AG04450 (cell line): ENCODE measurements at regions of chr13 and their contacts with region 1.

Region 1: GRCh38 chr13:27826379-27827353 is 34.4 kb downstream of the GSX1 start:
- DNase-seq: peak; percentile 59
- H3K4me3 ChIP-seq: peak overlapping the region; percentile 49
- H3K27ac ChIP-seq: no peak overlapping the region
- H3K27me3 ChIP-seq: peaks cover 21% of the 10 kb centered on the region
- CTCF ChIP-seq: peak; percentile 88

Region 2: DNA sequence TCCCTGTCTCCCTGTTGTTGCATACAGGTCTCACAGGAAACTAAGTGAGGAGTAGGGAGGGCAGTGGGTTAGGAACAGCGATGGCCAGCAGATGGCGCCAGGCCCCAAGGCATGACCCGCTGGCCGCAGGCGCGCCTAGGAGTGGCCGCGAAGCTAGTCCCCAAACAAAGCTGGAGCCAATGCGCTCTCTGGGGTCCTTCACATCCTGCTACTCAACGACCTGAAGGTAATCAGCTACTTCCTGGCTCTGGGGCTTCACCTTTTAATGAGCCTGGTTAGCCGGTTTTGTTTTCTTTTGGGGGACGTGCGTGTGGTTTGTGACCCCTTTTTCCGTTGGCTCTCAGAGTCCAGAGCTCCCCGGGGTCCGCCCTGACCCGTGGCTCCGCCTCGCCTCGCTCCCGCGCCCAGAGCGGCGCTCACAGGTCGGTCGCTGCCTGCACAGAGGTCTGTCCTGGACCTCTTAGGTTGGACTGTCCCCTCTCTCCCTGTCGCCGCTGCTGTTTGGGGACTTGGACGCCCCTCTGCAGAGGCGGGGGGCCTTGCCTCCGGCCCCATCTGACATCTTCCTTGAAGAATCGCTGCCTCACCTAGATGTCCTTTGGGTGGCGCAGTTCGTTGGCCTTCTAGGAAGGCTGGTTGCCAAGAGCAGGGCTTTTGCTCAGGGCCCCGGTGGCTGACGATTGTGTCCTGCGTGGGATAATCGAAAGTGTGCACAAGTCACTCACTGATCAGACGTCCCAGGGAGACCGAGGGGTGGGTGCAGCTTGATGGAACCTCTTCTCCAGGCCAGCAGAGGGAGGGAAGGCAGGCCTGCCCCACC is 464.4 kb before region 1 on chr13:
- CTCF ChIA-PET with region 1: interaction called, 227 read pairs
- POLR2A ChIA-PET with region 1: interaction called, 3 read pairs
- DNase-seq: peak; percentile 46
- H3K4me3 ChIP-seq: peak overlapping the region; percentile 66
- H3K27ac ChIP-seq: no peak overlapping the region
- H3K27me3 ChIP-seq: peaks cover 6% of the 10 kb centered on the region
- CTCF ChIP-seq: peak; percentile 97

Region 3: GRCh38 chr13:27406178-27406939 is 420.3 kb before region 1 on chr13:
- CTCF ChIA-PET with region 1: interaction called, 13 read pairs
- POLR2A ChIA-PET with region 1: no interaction called
- DNase-seq: no peak
- H3K4me3 ChIP-seq: no peak overlapping the region
- H3K27ac ChIP-seq: no peak overlapping the region
- H3K27me3 ChIP-seq: peaks cover 28% of the 10 kb centered on the region
- CTCF ChIP-seq: peak; percentile 63

Region 4: GRCh38 chr13:27533155-27533643 is 293.5 kb before region 1 on chr13:
- CTCF ChIA-PET with region 1: interaction called, 280 read pairs
- POLR2A ChIA-PET with region 1: interaction called, 5 read pairs
- DNase-seq: peak; percentile 41
- H3K4me3 ChIP-seq: no peak overlapping the region
- H3K27ac ChIP-seq: no peak overlapping the region
- H3K27me3 ChIP-seq: no peaks in the 10 kb centered on the region
- CTCF ChIP-seq: peak; percentile 98

Region 5: DNA sequence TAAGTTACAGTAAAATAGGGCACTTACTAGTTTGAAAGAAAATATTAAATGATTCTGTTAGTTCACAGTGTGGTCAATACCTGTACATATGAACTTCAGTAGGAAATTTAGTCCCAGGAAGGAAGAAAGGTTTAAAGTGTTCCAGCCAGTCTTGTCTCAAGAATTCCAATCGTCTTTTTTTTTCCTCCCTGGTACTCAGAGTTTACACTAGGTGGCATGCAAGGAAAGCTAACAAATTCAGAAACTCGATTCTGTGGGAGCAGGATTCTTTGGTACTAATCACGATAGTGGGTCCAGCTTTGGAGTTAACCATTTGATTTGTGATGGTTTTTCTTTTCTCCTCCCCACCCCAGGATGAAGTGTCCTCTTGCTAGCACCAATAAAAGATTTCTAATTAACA is 161.3 kb before region 1 on chr13:
- CTCF ChIA-PET with region 1: interaction called, 25 read pairs
- POLR2A ChIA-PET with region 1: no interaction called
- DNase-seq: no peak
- H3K4me3 ChIP-seq: no peak overlapping the region
- H3K27ac ChIP-seq: no peak overlapping the region
- H3K27me3 ChIP-seq: no peaks in the 10 kb centered on the region
- CTCF ChIP-seq: peak; percentile 41

Region 6: DNA sequence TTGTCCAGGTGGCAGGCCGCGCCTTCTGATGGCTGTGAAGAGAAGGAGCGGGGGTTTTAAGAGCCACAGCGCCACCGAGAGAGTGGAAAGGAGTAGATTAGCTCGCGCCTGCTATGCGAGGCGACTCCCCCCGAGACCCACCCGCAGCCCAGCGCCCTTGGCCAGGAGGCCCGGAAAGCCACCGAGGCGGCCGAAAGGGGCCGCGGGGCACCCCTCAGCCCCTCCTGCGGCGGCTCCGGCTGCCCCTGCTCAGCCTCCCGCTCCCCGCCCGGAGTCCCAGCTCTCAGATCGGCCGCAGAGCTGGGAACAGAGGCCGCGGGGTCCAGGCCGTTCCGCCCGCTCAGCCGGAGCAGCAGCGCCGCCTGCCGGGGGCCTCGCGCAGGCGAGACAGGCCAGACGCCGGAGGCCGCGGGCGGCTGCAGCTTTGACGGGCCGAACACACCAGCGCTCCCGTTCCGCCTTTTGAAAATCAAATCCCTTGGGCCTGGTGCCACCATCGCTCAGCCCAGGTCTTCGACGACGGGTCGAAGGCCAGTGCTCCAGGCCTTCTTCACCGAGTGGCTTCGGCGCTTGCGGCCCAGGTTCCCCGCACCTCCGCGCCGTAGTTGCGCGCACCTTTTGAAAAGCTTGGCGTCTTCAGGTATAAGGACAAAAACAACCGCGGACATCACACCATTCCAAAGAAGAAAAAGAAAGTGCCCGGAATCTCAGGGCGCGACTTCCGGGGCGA is 127.2 kb after region 1 on chr13:
- CTCF ChIA-PET with region 1: interaction called, 22 read pairs
- POLR2A ChIA-PET with region 1: interaction called, 5 read pairs
- DNase-seq: peak; percentile 10
- H3K4me3 ChIP-seq: peak overlapping the region; percentile 53
- H3K27ac ChIP-seq: no peak overlapping the region
- H3K27me3 ChIP-seq: peaks cover 51% of the 10 kb centered on the region
- CTCF ChIP-seq: peak; percentile 73

Region 7: GRCh38 chr13:28778308-28779215 is 951.9 kb after region 1 on chr13:
- CTCF ChIA-PET with region 1: no interaction called
- POLR2A ChIA-PET with region 1: no interaction called
- DNase-seq: no peak
- H3K4me3 ChIP-seq: no peak overlapping the region
- H3K27ac ChIP-seq: no peak overlapping the region
- H3K27me3 ChIP-seq: peaks cover 2% of the 10 kb centered on the region
- CTCF ChIP-seq: no peak